ENCODE measurements at regions of chr17 and their contacts with region 1.

Region 1: GRCh38 chr17:48678141-48678971 is 44.0 kb downstream of the PRAC1 start:
- DNase-seq: peak; percentile 79
- H3K4me3 Mint-ChIP-seq: no peak overlapping the region
- H3K27ac Mint-ChIP-seq: no peak overlapping the region
- H3K4me1 Mint-ChIP-seq: peaks cover 2% of the 10 kb centered on the region
- H3K27me3 Mint-ChIP-seq: peaks cover 29% of the 10 kb centered on the region

Region 2: DNA sequence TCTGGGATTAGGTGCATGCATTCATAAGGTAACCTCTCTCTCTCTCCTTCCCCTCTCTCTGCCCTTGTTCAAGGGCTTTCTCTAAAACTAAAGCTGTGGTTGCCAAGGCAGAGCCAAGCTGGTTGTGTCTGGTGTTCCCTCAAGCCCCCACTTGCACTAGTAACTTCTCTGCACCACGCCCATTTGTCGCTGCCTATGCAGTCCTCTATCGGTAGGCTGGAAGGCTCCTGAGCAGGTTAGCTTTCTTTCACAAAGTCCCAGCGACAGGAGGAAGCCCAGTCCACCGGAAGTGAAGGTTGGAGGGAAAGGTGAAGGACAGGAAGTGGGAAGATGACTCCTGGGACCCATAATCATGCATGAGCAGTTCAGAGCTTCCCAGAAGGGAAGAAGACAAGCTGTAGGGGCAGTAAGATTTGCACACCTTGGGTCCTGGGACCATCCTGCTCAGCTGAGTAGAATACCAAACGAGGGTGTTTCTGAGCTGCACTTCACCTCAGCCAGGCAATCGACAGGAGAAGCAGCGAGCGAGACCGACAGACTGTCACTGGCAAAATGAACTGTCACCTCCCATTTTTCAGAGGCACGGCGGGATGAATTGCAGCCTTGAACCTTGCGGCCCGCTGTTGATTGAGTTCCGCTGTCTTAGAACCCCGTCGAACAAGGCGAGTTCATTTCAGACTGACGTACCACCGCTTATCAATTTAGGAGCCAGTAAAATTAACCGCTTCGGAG is 233.7 kb before region 1 on chr17:
- CTCF ChIA-PET with region 1: no interaction called
- POLR2A ChIA-PET with region 1: no interaction called
- intact Hi-C with region 1: no loop called
- DNase-seq: peak; percentile 57
- H3K4me3 Mint-ChIP-seq: peak overlapping the region; percentile 49
- H3K27ac Mint-ChIP-seq: peak overlapping the region; percentile 72
- H3K4me1 Mint-ChIP-seq: peaks cover 69% of the 10 kb centered on the region
- H3K27me3 Mint-ChIP-seq: no peaks in the 10 kb centered on the region

Region 3: DNA sequence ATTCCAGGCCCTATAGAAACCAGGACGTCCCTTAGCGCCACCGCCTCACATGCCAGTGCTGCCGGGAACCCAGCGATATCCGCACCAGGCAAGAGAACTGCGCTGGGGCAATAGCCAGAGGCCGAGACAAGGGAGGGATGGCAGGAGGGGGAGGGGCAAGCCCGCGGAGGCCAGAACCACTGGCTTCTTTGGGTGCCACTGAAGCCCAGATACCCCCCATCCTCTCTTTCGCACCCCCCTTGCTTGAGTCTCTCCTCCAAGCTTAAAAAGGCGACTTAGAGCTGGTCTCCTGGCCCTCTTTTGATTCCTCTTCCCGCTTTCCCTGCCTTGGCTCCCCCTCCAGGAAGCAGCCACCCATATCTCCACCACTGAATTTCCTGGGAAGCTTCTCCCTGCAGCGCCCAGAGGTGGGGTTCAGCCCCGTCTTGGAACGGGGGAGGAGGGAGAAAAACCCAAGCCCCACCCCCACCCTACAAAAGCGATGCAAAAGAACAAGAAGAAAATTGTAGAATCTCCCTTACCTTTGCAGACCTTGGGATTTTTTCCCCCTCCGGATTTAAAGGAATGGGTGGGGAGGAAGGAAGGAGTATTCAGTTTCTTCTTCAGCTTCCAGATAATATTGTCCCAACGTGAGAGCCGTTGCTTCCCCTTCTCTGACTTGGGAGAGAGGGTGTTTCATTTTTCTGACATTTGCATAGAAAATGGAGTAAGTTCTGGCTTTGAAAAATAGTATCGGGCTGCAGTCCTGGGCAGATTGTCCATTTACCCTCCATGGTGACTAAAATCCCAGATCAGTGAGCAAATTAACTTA is 74.2 kb before region 1 on chr17:
- CTCF ChIA-PET with region 1: no interaction called
- POLR2A ChIA-PET with region 1: no interaction called
- intact Hi-C with region 1: no loop called
- DNase-seq: no peak
- H3K4me3 Mint-ChIP-seq: no peak overlapping the region
- H3K27ac Mint-ChIP-seq: no peak overlapping the region
- H3K4me1 Mint-ChIP-seq: peaks cover 6% of the 10 kb centered on the region
- H3K27me3 Mint-ChIP-seq: peaks cover 77% of the 10 kb centered on the region

Region 4: DNA sequence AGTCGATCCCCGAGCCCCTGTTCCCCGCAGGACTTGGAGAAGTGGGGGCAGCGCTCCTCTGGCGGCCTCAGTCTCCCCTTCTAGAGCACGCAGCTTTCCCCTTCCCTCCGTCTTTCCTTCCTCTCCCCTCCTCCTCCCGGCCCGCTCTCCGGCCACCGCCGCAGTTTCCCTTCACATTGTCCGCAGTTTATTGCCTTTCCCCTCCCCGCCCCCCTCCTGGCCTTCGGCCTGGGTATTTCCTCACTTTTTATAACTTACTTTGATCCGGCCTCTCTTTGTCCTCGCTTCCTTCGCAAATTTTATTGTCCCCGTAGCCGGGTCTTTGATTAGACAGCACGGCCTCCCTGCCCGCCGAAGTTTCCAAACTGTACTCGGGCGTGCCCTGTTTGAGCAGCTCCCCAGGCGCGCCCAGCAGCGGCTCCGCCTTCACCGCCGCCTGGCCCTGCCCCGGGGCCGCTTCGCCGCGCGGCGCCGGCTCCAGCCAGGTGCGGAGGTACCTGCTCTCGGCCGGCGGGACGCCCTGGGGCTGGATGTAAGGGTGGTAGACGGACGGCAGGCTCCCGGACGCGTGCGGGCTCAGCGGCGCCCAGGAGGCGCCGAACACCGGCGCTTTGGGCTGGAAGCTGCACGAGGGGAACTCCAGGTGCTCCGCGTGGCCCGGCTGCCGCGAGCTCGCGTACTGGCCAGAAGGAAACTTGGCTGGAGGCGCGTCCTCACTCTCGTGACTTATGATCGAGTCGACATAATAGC is 52.7 kb before region 1 on chr17:
- CTCF ChIA-PET with region 1: no interaction called
- POLR2A ChIA-PET with region 1: no interaction called
- intact Hi-C with region 1: no loop called
- DNase-seq: peak; percentile 54
- H3K4me3 Mint-ChIP-seq: peak overlapping the region; percentile 72
- H3K27ac Mint-ChIP-seq: no peak overlapping the region
- H3K4me1 Mint-ChIP-seq: peaks cover 8% of the 10 kb centered on the region
- H3K27me3 Mint-ChIP-seq: peaks cover 75% of the 10 kb centered on the region

Region 5: DNA sequence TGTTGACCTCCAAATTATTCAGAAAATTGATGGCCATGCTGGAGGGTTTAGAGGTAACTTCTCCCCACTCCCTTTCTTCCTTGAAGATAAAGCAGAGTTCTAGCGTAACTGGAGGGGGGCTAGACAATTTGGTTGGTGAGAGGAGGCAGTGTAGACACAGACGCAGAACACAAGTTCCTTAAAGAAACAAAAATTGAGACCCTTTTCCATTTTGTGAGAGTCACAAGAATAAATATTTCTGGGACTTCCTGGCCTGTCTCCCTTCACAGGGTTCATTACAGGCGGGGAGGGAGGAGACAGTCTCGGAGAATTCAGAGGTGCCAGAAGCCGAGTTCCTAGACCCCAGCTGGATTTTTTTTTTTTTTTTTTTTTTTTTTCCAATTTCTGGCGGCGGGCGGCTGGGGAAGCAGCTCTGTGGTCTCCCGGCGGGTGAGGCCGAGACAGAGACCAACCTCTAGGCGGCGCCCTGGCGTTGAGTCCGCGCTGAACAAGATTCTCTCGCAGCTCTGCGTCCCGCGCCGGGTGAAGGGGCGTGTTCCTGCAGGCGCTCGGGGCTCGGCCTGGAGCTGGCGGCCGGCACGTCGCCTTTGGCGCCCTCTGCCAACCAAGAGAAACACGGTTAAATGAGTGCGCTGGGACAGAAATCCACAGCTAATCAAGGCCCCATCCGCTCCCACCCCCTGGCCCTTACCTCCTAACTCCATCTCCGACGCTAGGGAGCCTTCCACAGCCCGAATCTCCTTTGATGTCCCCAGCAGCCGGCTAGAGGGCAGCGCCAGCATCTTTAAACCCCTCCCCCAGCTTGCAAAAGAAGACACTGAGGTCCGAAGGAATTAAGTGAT is 42.0 kb before region 1 on chr17:
- CTCF ChIA-PET with region 1: interaction called, 10 read pairs
- POLR2A ChIA-PET with region 1: no interaction called
- intact Hi-C with region 1: no loop called
- DNase-seq: peak; percentile 85
- H3K4me3 Mint-ChIP-seq: peak overlapping the region; percentile 13
- H3K27ac Mint-ChIP-seq: no peak overlapping the region
- H3K4me1 Mint-ChIP-seq: peaks cover 4% of the 10 kb centered on the region
- H3K27me3 Mint-ChIP-seq: peaks cover 76% of the 10 kb centered on the region

Region 6: GRCh38 chr17:48690655-48691054 is 12.3 kb after region 1 on chr17:
- CTCF ChIA-PET with region 1: interaction called, 13 read pairs
- POLR2A ChIA-PET with region 1: no interaction called
- intact Hi-C with region 1: no loop called
- DNase-seq: no peak
- H3K4me3 Mint-ChIP-seq: no peak overlapping the region
- H3K27ac Mint-ChIP-seq: no peak overlapping the region
- H3K4me1 Mint-ChIP-seq: no peaks in the 10 kb centered on the region
- H3K27me3 Mint-ChIP-seq: peaks cover 7% of the 10 kb centered on the region

Region 7: DNA sequence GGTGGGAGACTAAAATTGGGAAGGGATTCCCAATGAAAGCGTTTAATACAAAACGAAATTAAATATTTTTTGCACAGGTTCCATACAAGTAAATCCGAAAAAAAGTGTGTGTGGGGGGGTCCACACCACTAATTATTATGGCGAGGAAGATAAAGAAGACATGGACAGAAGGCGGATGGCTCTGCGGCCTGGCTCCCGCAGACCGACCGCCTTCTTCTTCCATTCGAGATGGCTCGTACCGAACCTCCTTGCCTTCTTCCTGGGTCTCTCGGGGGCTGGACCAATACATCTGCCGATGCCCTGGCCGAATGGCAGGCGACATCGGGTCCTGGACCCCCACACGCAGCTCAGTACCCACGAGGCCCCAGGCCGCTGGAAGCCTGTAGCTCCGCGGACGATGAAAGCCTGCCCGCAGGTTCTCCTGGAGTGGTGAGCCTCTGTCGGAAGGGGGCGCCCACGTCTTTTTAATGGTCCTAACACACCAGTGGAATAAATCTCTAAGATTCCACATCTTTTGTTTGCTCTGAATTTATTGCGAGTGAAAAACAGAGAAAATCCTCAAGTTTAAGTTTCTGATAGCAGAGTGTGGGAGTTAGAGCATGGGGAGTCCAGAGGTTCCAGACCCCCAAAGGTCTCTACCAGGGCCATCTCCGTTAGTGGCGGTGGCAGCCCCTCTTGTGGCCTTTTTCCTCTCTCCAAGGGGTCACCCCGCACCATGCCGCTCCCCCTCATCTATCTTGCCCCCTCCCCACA is 46.1 kb after region 1 on chr17:
- CTCF ChIA-PET with region 1: interaction called, 49 read pairs
- POLR2A ChIA-PET with region 1: no interaction called
- intact Hi-C with region 1: loop called (anchors 5 kb)
- DNase-seq: peak; percentile 87
- H3K4me3 Mint-ChIP-seq: no peak overlapping the region
- H3K27ac Mint-ChIP-seq: no peak overlapping the region
- H3K4me1 Mint-ChIP-seq: peaks cover 36% of the 10 kb centered on the region
- H3K27me3 Mint-ChIP-seq: peaks cover 90% of the 10 kb centered on the region

Region 8: DNA sequence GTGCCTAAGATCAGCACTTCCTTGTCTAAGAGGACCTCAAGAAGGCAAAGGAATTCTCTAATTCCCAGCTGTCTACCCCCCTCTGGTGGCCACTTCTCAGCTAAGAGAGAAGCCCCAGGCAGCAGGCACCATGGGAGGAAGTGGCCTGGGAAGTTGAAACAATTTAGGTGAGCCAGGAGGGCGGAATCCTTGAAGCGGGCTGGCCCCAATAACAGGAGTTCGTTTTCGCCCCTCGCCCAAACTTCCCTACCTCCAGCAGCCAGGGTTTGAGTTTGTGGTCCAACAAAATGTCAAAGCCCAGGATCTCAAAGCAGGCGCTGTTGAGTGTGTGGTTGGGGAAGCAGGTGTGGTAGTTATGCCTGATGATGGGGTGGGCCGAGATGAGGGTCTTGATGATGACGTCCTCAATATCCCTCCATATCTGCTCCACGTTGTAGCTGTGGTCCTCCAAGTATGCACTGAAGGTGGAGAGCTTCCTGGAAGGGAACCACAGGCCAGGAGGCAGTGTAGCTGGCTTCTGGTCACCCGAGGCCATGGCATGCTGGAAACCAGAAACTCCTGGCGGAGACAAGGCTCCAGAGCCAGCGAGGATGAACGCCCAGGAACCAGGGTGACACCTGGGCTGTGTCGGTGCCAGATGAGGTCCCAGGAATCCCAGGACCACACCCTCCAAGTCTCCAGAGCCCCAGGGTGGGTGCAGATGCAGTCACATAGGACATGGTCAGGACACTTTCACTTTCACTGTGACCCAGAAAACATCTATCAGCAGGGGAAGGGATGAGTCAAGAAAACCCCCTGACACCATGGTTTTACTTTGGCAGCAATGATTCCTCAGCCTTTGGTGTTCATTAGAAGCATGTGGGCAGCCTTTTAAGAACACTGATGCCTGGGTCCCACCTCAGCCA is 113.0 kb after region 1 on chr17:
- CTCF ChIA-PET with region 1: interaction called, 51 read pairs
- POLR2A ChIA-PET with region 1: interaction called, 3 read pairs
- intact Hi-C with region 1: loop called (anchors 5 kb)
- DNase-seq: peak; percentile 43
- H3K4me3 Mint-ChIP-seq: no peak overlapping the region
- H3K27ac Mint-ChIP-seq: no peak overlapping the region
- H3K4me1 Mint-ChIP-seq: peaks cover 5% of the 10 kb centered on the region
- H3K27me3 Mint-ChIP-seq: peaks cover 29% of the 10 kb centered on the region

Region 9: GRCh38 chr17:49031965-49032928 is 353.9 kb after region 1 on chr17:
- CTCF ChIA-PET with region 1: interaction called, 23 read pairs
- POLR2A ChIA-PET with region 1: no interaction called
- intact Hi-C with region 1: no loop called
- DNase-seq: peak; percentile 55
- H3K4me3 Mint-ChIP-seq: no peak overlapping the region
- H3K27ac Mint-ChIP-seq: no peak overlapping the region
- H3K4me1 Mint-ChIP-seq: no peaks in the 10 kb centered on the region
- H3K27me3 Mint-ChIP-seq: peaks cover 3% of the 10 kb centered on the region